Caco-2 (cell line): ENCODE measurements at regions of chr3 and their contacts with region 1.

Region 1: DNA sequence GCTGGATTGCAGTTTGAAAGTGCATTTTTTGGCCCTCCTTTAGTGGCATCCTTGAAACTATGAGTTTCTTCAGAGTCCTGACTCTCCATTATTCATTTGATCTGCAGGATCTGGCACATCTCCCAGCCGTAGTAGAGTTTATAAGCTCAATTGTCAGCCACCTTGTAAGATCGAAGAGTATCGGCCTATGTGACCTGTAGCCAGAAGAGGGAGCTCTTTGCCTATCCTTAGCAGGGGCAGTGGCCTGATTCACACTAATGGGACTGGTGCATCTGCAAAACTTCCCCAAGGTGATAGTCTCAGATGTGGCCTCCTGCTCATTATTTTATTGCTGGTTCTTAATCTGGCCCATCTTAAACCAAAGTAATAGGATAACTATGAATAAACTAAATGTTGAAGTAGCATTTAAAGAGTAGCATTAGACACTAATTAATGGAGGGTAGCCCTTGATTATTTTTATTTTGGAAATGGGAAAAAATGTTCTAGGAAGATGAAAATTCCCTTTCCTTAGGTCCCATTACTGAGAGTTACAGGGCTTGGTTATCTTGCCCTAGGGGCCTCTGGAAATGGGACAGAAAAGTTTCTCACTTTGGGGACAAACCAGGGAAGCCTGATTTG is 21.2 kb downstream of the GCSAM start:
- DNase-seq: peak; percentile 54 to 65
- H3K4me3 ChIP-seq: no peak overlapping the region
- H3K4me3 Mint-ChIP-seq: no peak overlapping the region
- H3K27ac Mint-ChIP-seq: no peak overlapping the region
- H3K4me1 ChIP-seq: no peaks in the 10 kb centered on the region
- H3K4me1 Mint-ChIP-seq: peaks cover 12% of the 10 kb centered on the region
- H3K27me3 ChIP-seq: no peaks in the 10 kb centered on the region
- H3K27me3 Mint-ChIP-seq: no peaks in the 10 kb centered on the region
- CTCF ChIP-seq: peak; percentile 73 to 86

Region 2: DNA sequence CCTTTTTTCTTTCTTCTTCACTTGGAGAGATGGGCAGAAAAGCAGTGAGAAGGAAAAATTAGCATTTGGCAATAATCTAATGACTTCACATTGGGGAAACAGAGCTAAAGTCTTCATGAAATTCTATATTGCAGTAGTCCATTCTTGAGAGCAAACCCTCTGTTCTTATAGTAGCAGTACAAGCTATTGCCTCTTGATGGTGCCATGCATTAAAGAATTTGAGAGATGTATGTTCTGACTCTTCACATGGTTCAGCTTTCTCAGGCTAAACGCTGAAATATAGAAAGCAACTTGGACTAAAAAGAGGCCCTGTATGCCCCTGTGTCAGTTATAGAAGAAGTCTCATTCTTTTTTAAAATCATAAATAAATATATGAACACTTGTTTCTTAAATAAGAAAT is 216.8 kb before region 1 on chr3:
- CTCF ChIA-PET with region 1: no interaction called
- POLR2A ChIA-PET with region 1: no interaction called
- intact Hi-C with region 1: no loop called
- DNase-seq: no peak
- H3K4me3 ChIP-seq: no peak overlapping the region
- H3K4me3 Mint-ChIP-seq: no peak overlapping the region
- H3K27ac Mint-ChIP-seq: no peak overlapping the region
- H3K4me1 ChIP-seq: no peaks in the 10 kb centered on the region
- H3K4me1 Mint-ChIP-seq: no peaks in the 10 kb centered on the region
- H3K27me3 ChIP-seq: no peaks in the 10 kb centered on the region
- H3K27me3 Mint-ChIP-seq: no peaks in the 10 kb centered on the region
- CTCF ChIP-seq: peak; percentile 20 to 39

Region 3: DNA sequence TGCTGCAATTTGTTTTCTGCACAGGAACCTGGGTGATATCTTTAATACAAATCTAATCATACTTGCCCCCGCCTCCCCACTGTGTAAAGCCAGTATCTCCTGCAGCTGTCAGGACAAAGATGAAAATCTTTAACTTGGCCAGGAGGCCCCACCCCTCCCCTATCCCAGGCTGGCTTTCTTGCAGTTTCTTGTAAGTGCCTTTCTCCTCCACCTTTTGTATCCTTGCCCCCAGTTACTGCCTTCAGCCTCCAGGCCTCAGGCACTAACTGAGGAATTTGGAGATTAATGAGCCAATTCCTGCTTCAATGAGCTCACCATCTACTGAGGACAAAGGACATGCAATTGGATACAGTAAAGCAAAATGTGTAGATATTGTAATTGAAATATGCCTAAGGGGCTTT is 14.6 kb after region 1 on chr3:
- CTCF ChIA-PET with region 1: interaction called, 15 read pairs
- POLR2A ChIA-PET with region 1: interaction called, 3 read pairs
- intact Hi-C with region 1: no loop called
- DNase-seq: peak; percentile 19 to 46
- H3K4me3 ChIP-seq: no peak overlapping the region
- H3K4me3 Mint-ChIP-seq: no peak overlapping the region
- H3K27ac Mint-ChIP-seq: no peak overlapping the region
- H3K4me1 ChIP-seq: peaks cover 51% of the 10 kb centered on the region
- H3K4me1 Mint-ChIP-seq: peaks cover 29% of the 10 kb centered on the region
- H3K27me3 ChIP-seq: no peaks in the 10 kb centered on the region
- H3K27me3 Mint-ChIP-seq: no peaks in the 10 kb centered on the region
- CTCF ChIP-seq: no peak

Region 4: DNA sequence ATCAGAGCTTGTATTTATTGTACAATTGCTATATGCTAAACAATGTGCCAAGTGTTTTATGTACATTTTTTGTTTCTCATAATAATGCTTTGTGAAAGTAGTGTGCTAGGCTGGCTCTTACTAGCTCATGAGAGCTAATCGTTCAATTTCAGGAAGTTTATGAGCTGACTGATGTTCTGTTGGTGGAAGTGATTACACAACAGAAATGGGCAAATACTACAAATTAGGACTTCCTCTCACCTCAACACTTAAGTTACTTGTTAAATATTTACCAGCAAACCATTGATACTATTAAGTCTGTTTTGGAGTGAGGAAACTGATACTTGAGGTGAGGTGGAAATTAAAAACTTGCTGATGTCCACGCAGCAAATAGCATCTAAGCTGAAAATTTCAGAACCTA is 149.8 kb after region 1 on chr3:
- CTCF ChIA-PET with region 1: no interaction called
- POLR2A ChIA-PET with region 1: no interaction called
- intact Hi-C with region 1: no loop called
- DNase-seq: no peak
- H3K4me3 ChIP-seq: no peak overlapping the region
- H3K4me3 Mint-ChIP-seq: no peak overlapping the region
- H3K27ac Mint-ChIP-seq: no peak overlapping the region
- H3K4me1 ChIP-seq: no peaks in the 10 kb centered on the region
- H3K4me1 Mint-ChIP-seq: no peaks in the 10 kb centered on the region
- H3K27me3 ChIP-seq: no peaks in the 10 kb centered on the region
- H3K27me3 Mint-ChIP-seq: no peaks in the 10 kb centered on the region
- CTCF ChIP-seq: no peak